ENCODE measurements at regions of chr1 and their contacts with region 1.

Region 1: DNA sequence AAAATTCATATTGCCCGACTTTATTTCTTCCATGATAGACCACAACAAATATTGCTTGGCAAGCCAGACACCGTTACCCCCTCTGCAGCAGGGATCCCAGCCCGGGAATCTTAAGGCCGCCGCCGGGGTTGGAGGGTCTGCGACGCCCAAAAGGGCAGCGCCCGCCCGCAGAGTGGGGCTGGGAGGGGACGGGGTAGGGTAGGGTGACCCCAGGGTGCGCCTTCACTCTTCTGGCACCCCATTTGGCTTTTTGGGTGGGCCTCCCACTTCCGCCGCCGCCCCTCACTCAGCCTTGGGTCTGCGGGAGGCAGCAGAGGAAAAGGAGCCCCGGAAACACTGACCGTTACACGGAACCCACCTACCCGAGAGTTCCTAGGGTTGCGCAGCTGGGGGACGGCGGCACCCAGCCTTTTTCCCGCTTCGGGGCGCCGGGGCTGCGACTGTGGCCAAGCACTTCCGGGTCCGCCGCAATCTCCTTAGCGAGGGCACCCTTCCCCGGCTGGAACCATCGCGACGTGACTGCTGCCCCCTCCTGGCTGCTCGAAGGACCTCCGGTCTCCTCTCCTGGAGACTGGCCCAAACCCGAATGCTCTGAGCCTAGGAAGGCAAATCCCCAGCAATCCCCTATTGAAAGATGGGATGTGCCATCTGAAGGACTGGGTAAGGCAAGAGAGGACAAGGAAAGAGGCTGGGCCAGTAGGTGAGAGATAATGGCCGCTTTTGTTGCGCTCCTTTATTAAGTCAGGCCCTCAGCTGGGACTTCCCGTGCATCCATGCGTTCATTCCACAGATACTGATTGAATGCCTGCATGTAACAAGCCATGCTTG is at the start of gene PIGC:
- DNase-seq: peak; percentile 95
- H3K4me3 ChIP-seq: peak within 1 kb of the TSS; percentile 54 to 99 (median 77)
- H3K27ac ChIP-seq: peak within 1 kb of the TSS; percentile 68 to 85 (median 74)
- H3K4me1 ChIP-seq: peaks cover 0 to 26% (median 17%) of the 10 kb centered on the region in 4 donors
- H3K27me3 ChIP-seq: no peaks in the 10 kb centered on the region
- CTCF ChIP-seq: peak; percentile 62 to 87 (median 81)
- EP300 ChIP-seq: no peak
- POLR2A ChIP-seq: no peak
- total RNA-seq, gene PIGC: 20.8 to 37.4 (median 29.7) TPM

Region 2: GRCh38 chr1:171781176-171781875 is 662.5 kb before region 1 on chr1 and contains the start of gene METTL13:
- intact Hi-C with region 1: loop called (anchors 5 kb)
- DNase-seq: peak; percentile 99
- H3K4me3 ChIP-seq: peak within 1 kb of the TSS; percentile 56 to 84 (median 74)
- H3K27ac ChIP-seq: peak within 1 kb of the TSS; percentile 84 to 90 (median 89)
- H3K4me1 ChIP-seq: peaks cover 0 to 43% (median 33%) of the 10 kb centered on the region in 4 donors
- H3K27me3 ChIP-seq: no peaks in the 10 kb centered on the region
- CTCF ChIP-seq: no peak
- EP300 ChIP-seq: no peak
- POLR2A ChIP-seq: peak; percentile 94 to 95
- total RNA-seq, gene METTL13: 8.4 to 21.8 (median 17.0) TPM

Region 3: GRCh38 chr1:172002725-172003345 is 441.0 kb before region 1 on chr1:
- intact Hi-C with region 1: loop called (anchors 1 kb)
- DNase-seq: no peak
- H3K4me3 ChIP-seq: no peak overlapping the region
- H3K27ac ChIP-seq: no peak overlapping the region
- H3K4me1 ChIP-seq: no peaks in the 10 kb centered on the region
- H3K27me3 ChIP-seq: no peaks in the 10 kb centered on the region
- CTCF ChIP-seq: peak in 3 of 4 experiments; percentile 42 to 59 (median 46)
- EP300 ChIP-seq: no peak
- POLR2A ChIP-seq: no peak

Region 4: DNA sequence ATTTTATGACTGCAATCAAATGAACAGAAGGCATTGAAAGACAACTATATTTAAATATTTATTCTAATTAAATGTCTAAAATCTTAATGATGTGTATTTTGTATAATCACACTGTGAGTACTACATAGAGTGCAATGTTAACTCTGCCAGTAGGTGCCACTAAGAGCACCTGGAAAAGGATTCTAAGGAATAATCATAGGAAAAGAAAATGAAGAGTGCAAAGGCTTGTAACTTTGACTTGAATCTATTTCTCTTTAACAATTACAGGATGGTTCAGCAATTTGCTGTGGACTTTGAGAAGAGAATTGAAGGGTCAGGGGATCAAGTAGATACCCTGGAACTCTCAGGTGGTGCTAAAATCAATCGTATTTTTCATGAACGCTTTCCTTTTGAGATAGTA is 402.1 kb before region 1 on chr1:
- intact Hi-C with region 1: loop called (anchors 5 kb)
- DNase-seq: no peak
- H3K4me3 ChIP-seq: no peak overlapping the region
- H3K27ac ChIP-seq: no peak overlapping the region
- H3K4me1 ChIP-seq: no peaks in the 10 kb centered on the region
- H3K27me3 ChIP-seq: no peaks in the 10 kb centered on the region
- CTCF ChIP-seq: peak in 3 of 4 experiments; percentile 36 to 46 (median 39)
- EP300 ChIP-seq: no peak
- POLR2A ChIP-seq: no peak

Region 5: DNA sequence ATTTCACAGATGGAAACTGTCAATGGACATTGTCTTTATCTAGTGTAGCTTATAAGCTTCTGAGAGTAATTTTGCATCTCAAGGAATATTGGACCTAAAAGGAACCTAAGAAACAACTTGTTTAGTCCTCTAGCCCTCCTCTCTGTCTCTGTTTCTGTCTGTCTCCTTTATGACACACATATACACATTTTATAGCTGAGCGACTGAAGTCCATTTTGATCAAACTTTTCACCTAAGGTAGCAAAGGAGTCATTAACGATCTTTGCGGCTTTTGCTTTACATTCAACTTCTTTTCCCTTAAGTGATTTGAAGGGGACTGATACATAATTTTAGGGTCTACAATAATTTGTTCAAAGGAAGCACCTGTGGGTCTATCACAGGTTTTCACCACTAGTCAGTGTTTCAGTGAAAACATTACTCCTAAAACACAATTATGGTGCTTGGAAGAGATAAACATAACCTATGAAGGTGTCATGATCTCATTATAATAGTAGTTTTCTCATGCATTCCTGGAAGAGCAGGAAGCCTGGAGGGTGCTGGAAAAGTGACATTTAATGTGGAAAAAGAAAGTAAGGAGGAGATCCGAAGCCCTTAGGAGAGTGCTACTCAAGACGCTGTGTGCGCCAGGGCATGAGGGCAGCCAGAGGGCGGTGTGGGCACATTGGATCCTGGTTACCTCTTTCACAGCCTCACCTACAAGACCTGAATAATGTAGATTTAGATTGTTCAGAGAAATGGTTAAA is 353.9 kb before region 1 on chr1:
- intact Hi-C with region 1: loop called (anchors 2 kb)
- DNase-seq: peak; percentile 78
- H3K4me3 ChIP-seq: no peak overlapping the region
- H3K27ac ChIP-seq: no peak overlapping the region
- H3K4me1 ChIP-seq: no peaks in the 10 kb centered on the region
- H3K27me3 ChIP-seq: no peaks in the 10 kb centered on the region
- CTCF ChIP-seq: peak; percentile 42 to 77 (median 64)
- EP300 ChIP-seq: no peak
- POLR2A ChIP-seq: no peak

Measured in sigmoid colon (tissue), 7 donors.